ENCODE measurements at regions of chr22 and their contacts with region 1.

Region 1: GRCh38 chr22:22348127-22348814 is 103.7 kb downstream of the VPREB1 start:
- DNase-seq: no peak

Region 2: DNA sequence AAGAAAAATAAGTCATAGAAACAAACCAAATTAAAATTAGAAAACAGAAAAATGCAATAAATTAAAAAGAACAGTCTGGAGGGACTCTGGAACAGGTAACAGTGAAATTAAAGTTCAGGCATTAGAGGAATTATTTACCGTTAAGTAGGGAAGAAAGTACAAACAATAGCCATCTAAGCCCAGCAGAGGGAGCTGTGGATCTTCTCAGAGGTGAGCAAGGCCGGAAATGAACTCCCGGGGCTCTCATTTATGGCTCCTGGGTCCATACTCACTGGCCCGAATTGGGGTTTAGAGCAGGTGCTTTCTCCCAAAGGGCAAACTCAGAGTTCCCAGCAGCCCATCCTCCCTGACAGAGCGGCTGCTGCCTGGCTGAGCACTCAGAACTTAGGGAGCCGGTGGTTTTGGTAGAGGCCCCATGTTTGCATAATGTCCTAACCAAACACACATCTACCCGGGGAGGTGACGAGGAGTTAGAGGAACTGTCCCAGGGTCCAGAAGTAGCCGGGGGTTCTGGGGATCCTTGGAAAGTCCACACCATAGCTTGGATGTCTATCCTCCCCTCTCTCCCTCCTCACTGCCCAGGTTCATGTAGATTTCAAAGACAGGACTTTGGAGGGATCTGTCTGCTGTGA is 191.4 kb before region 1 on chr22:
- in situ Hi-C with region 1: no loop called
- DNase-seq: peak; percentile 67

Region 3: DNA sequence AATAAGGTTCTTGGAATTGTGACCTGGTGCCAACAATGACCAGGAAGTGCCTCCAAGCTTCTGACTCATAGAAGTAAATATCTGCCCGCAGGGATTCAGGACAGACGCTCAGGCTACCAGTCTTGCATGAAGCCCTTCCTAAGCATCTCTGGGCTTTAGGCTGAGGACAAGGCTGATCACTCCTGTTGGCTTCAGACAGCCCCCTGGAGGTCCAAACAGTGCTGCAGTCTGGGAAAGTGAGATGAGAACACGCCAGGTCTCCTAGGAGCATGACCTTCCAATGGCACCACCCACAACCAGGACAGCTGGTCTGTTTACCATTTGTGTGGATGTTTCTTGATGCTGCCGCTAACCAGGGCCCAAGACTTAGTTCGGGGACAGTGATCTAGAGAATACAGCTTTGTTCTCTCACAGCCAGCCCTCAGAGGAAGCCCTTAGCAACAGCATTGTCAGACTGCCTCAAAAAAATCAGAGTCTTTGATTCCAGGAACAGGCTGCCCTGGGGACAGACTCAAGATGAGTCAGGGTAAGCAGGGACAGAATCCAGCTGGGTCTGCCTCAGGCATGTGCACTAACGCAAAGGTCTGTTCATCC is 49.1 kb after region 1 on chr22:
- in situ Hi-C with region 1: loop called (anchors 5 kb)
- DNase-seq: no peak